Activated CD8-positive, alpha-beta T cell treated with anti-CD3 and anti-CD28 coated beads for 36 hours (primary cell): ENCODE measurements at regions of chr14 and their contacts with region 1.

Region 1: GRCh38 chr14:24114536-24115450 is at the starts of genes DCAF11 and NRL:
- DNase-seq: peak; percentile 99
- ATAC-seq: peak; percentile 88
- H3K4me3 Mint-ChIP-seq: peak within 1 kb of the TSS; percentile 98
- H3K27ac Mint-ChIP-seq: peak within 1 kb of the TSS; percentile 99
- H3K4me1 Mint-ChIP-seq: peaks cover 20% of the 10 kb centered on the region
- H3K27me3 Mint-ChIP-seq: no peaks in the 10 kb centered on the region
- CTCF ChIP-seq: no peak
- total RNA-seq, gene DCAF11: 59.9 to 63.9 TPM
- total RNA-seq, gene NRL: 1.8 to 2.5 TPM

Region 2: DNA sequence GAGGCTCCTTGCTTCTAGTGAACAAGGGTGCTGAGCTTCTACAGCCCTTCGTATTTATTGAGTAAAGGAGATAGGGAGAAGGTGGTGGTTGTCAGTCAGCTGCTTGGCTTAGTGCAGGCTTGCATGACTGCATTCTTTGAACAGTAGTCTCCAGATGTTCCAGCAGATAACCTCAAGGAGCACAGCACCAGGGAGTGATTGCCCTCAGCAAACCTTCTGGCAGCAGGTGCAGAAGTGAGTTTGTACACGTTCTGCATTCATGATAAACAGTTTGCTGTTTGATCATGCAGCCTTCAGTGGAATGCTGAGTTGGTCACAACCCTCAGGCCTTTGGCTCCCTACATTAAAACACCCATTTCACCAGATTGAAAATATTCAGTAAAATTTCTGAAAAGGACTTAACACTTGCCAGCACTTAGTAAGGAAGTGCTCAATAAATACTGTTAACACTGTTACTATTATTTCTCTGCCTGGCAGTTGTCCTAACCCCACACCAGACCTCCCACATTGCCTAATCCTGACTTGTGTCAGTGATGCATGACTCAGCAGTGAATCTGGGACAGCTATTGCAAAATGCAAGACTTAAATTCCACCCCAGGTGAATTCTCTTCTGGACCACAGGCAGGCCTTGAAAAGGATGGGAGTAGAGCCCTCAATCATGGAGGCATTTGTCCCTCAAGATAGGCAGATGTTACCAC is 81.9 kb before region 1 on chr14:
- CTCF ChIA-PET with region 1: no interaction called
- POLR2A ChIA-PET with region 1: no interaction called
- intact Hi-C with region 1: no loop called
- DNase-seq: no peak
- ATAC-seq: no peak
- H3K4me3 Mint-ChIP-seq: no peak overlapping the region
- H3K27ac Mint-ChIP-seq: no peak overlapping the region
- H3K4me1 Mint-ChIP-seq: peaks cover 9% of the 10 kb centered on the region
- H3K27me3 Mint-ChIP-seq: no peaks in the 10 kb centered on the region
- CTCF ChIP-seq: no peak

Region 3: DNA sequence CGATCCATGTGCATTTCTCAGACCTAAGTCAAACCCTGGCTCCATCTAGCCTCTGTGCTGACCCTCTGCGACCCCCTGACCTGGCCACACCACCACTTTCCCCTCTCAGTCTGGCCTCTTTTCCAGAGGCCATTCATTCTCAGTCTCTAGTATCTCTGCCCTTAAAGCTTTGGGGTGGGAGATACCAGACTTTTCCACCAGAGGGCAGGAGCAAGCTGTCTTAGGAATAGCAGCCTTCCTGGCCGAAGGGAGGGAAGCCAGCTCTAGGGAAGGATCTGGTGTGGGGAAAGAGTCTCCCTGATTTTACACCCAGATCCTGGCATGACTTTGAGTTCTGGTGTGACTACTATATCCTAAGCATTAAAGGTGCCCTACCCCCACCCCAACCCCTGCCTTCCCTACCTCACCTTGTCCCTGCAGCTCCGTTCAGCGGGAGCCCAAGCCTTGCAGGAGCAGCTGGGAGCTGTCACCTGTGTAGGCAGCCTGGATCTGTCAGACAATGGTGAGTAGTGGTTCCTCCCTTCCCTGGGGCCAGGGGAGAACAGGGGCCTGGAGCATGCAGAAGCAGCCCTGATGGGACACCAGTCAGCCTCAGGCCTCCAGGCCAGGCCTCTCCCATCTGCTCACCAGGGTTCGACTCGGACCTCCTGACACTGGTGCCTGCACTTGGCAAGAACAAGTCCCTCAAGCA is 56.4 kb before region 1 on chr14:
- CTCF ChIA-PET with region 1: interaction called, 199 read pairs
- POLR2A ChIA-PET with region 1: interaction called, 18 read pairs
- intact Hi-C with region 1: loop called (anchors 2 kb)
- DNase-seq: peak; percentile 85
- ATAC-seq: peak; percentile 80
- H3K4me3 Mint-ChIP-seq: no peak overlapping the region
- H3K27ac Mint-ChIP-seq: peak overlapping the region; percentile 85
- H3K4me1 Mint-ChIP-seq: peaks cover 6% of the 10 kb centered on the region
- H3K27me3 Mint-ChIP-seq: no peaks in the 10 kb centered on the region
- CTCF ChIP-seq: peak; percentile 95

Region 4: GRCh38 chr14:24080888-24081738 is 33.7 kb before region 1 on chr14:
- CTCF ChIA-PET with region 1: interaction called, 34 read pairs
- POLR2A ChIA-PET with region 1: interaction called, 19 read pairs
- intact Hi-C with region 1: no loop called
- DNase-seq: peak; percentile 89
- ATAC-seq: peak; percentile 93
- H3K4me3 Mint-ChIP-seq: peak overlapping the region; percentile 75
- H3K27ac Mint-ChIP-seq: peak overlapping the region; percentile 75
- H3K4me1 Mint-ChIP-seq: peaks cover 19% of the 10 kb centered on the region
- H3K27me3 Mint-ChIP-seq: no peaks in the 10 kb centered on the region
- CTCF ChIP-seq: no peak

Region 5: GRCh38 chr14:24129410-24129998 is 14.7 kb after region 1 on chr14:
- CTCF ChIA-PET with region 1: interaction called, 21 read pairs
- POLR2A ChIA-PET with region 1: interaction called, 13 read pairs
- intact Hi-C with region 1: no loop called
- DNase-seq: no peak
- ATAC-seq: no peak
- H3K4me3 Mint-ChIP-seq: no peak overlapping the region
- H3K27ac Mint-ChIP-seq: no peak overlapping the region
- H3K4me1 Mint-ChIP-seq: peaks cover 18% of the 10 kb centered on the region
- H3K27me3 Mint-ChIP-seq: no peaks in the 10 kb centered on the region
- CTCF ChIP-seq: no peak

Region 6: GRCh38 chr14:24135834-24136542 is 21.2 kb after region 1 on chr14 and contains the start of gene PSME1:
- CTCF ChIA-PET with region 1: interaction called, 21 read pairs
- POLR2A ChIA-PET with region 1: interaction called, 53 read pairs
- intact Hi-C with region 1: loop called (anchors 2 kb)
- DNase-seq: peak; percentile 96
- ATAC-seq: peak; percentile 97
- H3K4me3 Mint-ChIP-seq: peak within 1 kb of the TSS; percentile 97
- H3K27ac Mint-ChIP-seq: peak within 1 kb of the TSS; percentile 92
- H3K4me1 Mint-ChIP-seq: peaks cover 56% of the 10 kb centered on the region
- H3K27me3 Mint-ChIP-seq: no peaks in the 10 kb centered on the region
- CTCF ChIP-seq: no peak
- total RNA-seq, gene PSME1: 451 to 460 TPM

Region 7: DNA sequence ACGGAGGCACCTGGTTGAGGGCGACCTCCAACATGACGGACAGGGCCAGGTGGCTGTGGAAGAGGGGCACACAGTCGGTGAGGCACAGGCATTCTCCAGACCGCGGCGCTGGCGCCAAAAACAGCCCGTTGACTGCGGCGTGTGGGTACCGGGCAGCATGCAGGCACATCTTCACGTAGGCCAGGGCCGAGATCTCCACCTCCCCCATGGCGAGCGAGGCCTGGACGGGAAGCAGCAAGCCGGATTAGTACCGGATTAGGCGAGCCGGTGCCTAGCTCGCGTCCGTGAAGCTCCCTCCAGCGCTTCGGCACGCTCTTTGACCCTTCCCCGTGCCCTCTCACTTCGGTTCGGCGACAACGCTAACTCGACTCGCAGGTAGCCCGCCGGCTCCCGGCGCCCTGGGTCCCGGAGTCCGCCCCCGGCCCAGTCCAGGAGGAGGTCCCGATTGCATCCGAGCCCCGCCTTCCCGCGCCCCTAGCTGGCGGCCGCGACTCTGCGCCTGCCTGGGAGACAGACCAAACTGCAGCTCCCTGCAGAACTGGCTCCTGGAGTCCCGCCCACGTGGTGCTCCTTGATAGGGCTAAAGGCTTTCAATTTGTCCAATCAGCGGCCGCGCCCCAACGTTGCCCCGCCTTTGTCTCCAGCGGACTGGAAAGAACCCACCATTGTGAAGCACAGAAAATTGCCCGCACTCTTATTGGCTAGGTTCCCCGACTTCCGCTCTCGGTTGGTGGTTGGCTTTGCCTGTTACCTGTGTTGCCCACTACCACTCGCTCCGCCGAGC is 26.5 kb after region 1 on chr14 and contains the start of gene EMC9:
- CTCF ChIA-PET with region 1: interaction called, 17 read pairs
- POLR2A ChIA-PET with region 1: interaction called, 62 read pairs
- intact Hi-C with region 1: loop called (anchors 2 kb)
- DNase-seq: peak; percentile 100
- ATAC-seq: peak; percentile 87
- H3K4me3 Mint-ChIP-seq: peak within 1 kb of the TSS; percentile 97
- H3K27ac Mint-ChIP-seq: peak within 1 kb of the TSS; percentile 97
- H3K4me1 Mint-ChIP-seq: peaks cover 68% of the 10 kb centered on the region
- H3K27me3 Mint-ChIP-seq: no peaks in the 10 kb centered on the region
- CTCF ChIP-seq: peak; percentile 39
- total RNA-seq, gene EMC9: 39.0 to 39.9 TPM

Region 8: DNA sequence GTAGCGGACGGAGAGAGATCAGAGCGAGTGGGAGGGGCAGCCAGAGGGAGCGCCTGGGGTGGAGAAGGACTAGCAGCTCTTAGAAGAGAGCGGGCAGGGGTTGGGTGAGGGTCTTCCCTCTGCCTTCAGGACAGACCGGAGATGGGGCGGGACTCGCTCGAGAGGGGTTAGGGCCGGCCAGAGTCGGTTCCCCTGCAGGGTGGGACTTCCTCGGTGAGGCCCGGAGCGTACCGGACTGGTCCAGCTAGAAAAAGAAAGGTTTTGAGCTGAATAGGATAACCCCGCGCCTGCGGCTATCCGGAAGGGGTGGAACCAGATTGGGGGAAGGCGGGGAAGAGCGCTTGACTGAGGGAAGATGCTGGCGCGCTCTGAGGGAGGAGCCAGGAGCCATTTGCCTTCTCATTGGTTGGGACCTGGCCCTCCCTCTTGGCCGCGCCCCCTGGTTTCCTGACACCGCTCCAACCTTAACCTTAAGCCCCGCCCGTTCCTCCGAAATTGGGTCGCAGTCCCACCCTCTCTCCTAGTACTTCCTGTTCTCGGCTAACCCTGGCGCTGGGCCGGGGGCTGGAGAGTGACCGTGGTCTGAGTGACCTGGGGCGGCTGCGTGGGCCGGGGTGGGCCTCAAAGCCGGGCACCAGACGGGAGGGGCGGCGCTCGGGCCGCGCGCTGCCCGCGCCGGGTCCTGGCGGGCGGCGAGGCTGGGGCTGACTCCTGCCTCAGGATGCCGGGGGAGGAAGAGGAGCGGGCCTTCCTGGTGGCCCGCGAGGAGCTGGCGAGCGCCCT is 32.4 kb after region 1 on chr14 and contains the start of gene RNF31:
- CTCF ChIA-PET with region 1: interaction called, 17 read pairs
- POLR2A ChIA-PET with region 1: interaction called, 62 read pairs
- intact Hi-C with region 1: no loop called
- DNase-seq: peak; percentile 100
- ATAC-seq: peak; percentile 87
- H3K4me3 Mint-ChIP-seq: peak within 1 kb of the TSS; percentile 89
- H3K27ac Mint-ChIP-seq: peak within 1 kb of the TSS; percentile 98
- H3K4me1 Mint-ChIP-seq: peaks cover 58% of the 10 kb centered on the region
- H3K27me3 Mint-ChIP-seq: no peaks in the 10 kb centered on the region
- CTCF ChIP-seq: no peak
- total RNA-seq, gene RNF31: 71.6 to 75.0 TPM

Region 9: GRCh38 chr14:24289649-24290249 is 175.0 kb after region 1 on chr14:
- CTCF ChIA-PET with region 1: no interaction called
- POLR2A ChIA-PET with region 1: no interaction called
- intact Hi-C with region 1: no loop called
- DNase-seq: peak; percentile 91
- ATAC-seq: peak; percentile 96
- H3K4me3 Mint-ChIP-seq: no peak overlapping the region
- H3K27ac Mint-ChIP-seq: peak overlapping the region; percentile 40
- H3K4me1 Mint-ChIP-seq: peaks cover 21% of the 10 kb centered on the region
- H3K27me3 Mint-ChIP-seq: no peaks in the 10 kb centered on the region
- CTCF ChIP-seq: no peak